ENCODE measurements at regions of chr3 and their contacts with region 1.

Region 1: DNA sequence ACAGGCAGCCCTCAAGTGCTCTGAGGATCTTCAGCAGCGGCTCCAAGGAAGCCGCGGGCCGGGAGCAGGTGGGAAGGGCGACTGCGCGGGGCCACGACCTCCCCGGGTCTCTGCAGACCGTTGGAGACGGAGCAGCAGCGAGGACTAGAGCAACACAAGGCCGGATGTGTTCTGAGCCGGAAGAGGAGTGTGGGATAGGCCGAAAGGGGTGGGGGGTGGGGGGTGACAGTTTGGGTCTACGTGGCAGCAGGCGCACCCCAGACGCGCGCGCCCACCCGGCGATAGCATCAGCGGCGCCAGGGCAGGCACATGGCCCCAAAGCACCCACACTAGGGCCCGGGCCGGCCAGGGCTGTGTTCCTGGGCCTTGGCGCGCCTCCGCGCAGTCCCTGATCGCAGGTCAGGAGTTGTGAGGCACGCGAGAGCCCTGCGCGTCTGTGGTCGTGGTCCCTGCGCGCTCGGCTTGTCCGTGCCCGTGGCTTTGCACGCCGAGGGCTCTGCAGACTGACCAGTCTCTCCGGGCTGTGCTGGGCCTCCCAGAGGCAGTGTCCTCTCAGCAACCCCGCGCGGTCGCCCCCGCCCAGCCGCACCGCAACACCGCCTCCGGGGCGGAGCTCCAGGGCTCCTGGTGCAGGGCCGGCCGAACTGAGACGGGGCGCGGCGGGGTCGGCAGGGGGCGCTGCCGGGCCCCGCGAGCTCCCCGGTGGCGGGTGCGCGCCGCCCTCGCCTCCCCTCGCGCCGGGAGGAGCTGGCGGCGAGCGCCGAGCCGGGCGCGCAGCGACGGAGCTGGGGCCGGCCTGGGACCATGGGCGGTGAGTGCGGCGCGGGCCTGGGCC is at the start of gene PXYLP1:
- DNase-seq: peak; percentile 84
- ATAC-seq: peak; percentile 92
- H3K4me3 ChIP-seq: peak within 1 kb of the TSS; percentile 64
- H3K27ac ChIP-seq: no peak within 1 kb of the TSS
- H3K4me1 ChIP-seq: peaks cover 11% of the 10 kb centered on the region; the same call in 1 of the 2 replicates
- H3K27me3 ChIP-seq: no peaks in the 10 kb centered on the region
- CTCF ChIP-seq: peak; percentile 38; the same call in 1 of the 2 replicates
- total RNA-seq, gene PXYLP1: 6.2 and 16.6 TPM in 2 replicates

Region 2: GRCh38 chr3:140791368-140791767 is 439.9 kb before region 1 on chr3:
- CTCF ChIA-PET with region 1: no interaction called
- POLR2A ChIA-PET with region 1: no interaction called
- intact Hi-C with region 1: no loop called
- DNase-seq: no peak
- ATAC-seq: no peak
- H3K4me3 ChIP-seq: no peak overlapping the region
- H3K27ac ChIP-seq: no peak overlapping the region
- H3K4me1 ChIP-seq: no peaks in the 10 kb centered on the region
- H3K27me3 ChIP-seq: no peaks in the 10 kb centered on the region
- CTCF ChIP-seq: no peak

Region 3: GRCh38 chr3:141151439-141151838 is 79.9 kb before region 1 on chr3:
- CTCF ChIA-PET with region 1: no interaction called
- POLR2A ChIA-PET with region 1: no interaction called
- intact Hi-C with region 1: no loop called
- DNase-seq: no peak
- ATAC-seq: no peak
- H3K4me3 ChIP-seq: no peak overlapping the region
- H3K27ac ChIP-seq: no peak overlapping the region
- H3K4me1 ChIP-seq: peaks cover 5% of the 10 kb centered on the region; the same call in 1 of the 2 replicates
- H3K27me3 ChIP-seq: no peaks in the 10 kb centered on the region
- CTCF ChIP-seq: no peak

Region 4: GRCh38 chr3:141275983-141276382 is 44.7 kb after region 1 on chr3:
- CTCF ChIA-PET with region 1: interaction called, 3 read pairs
- POLR2A ChIA-PET with region 1: no interaction called
- intact Hi-C with region 1: loop called (anchors 1 kb)
- DNase-seq: peak; percentile 98
- ATAC-seq: peak; percentile 83
- H3K4me3 ChIP-seq: 0 out of 2 replicates have a peak overlapping the region, but pooled peaks have one; percentile 13
- H3K27ac ChIP-seq: peak overlapping the region; percentile 99
- H3K4me1 ChIP-seq: peaks cover 36% of the 10 kb centered on the region
- H3K27me3 ChIP-seq: no peaks in the 10 kb centered on the region
- CTCF ChIP-seq: peak; percentile 59

Region 5: GRCh38 chr3:141303481-141304223 is 72.3 kb after region 1 on chr3:
- CTCF ChIA-PET with region 1: interaction called, 17 read pairs
- POLR2A ChIA-PET with region 1: interaction called, 4 read pairs
- intact Hi-C with region 1: loop called (anchors 2 kb)
- DNase-seq: peak; percentile 82
- ATAC-seq: peak; percentile 66
- H3K4me3 ChIP-seq: no peak overlapping the region
- H3K27ac ChIP-seq: no peak overlapping the region
- H3K4me1 ChIP-seq: peaks cover 4% of the 10 kb centered on the region; the same call in 1 of the 2 replicates
- H3K27me3 ChIP-seq: no peaks in the 10 kb centered on the region
- CTCF ChIP-seq: peak; percentile 79

Region 6: GRCh38 chr3:141321109-141321497 is 89.8 kb after region 1 on chr3:
- CTCF ChIA-PET with region 1: no interaction called
- POLR2A ChIA-PET with region 1: no interaction called
- intact Hi-C with region 1: no loop called
- DNase-seq: peak; percentile 16
- ATAC-seq: no peak
- H3K4me3 ChIP-seq: no peak overlapping the region
- H3K27ac ChIP-seq: no peak overlapping the region
- H3K4me1 ChIP-seq: 0 out of 2 replicates have a peak, but pooled peaks cover 5% of the 10 kb centered on the region
- H3K27me3 ChIP-seq: no peaks in the 10 kb centered on the region
- CTCF ChIP-seq: no peak